Endothelial cell of umbilical vein (primary cell): ENCODE measurements at regions of chr12 and their contacts with region 1.

Region 1: DNA sequence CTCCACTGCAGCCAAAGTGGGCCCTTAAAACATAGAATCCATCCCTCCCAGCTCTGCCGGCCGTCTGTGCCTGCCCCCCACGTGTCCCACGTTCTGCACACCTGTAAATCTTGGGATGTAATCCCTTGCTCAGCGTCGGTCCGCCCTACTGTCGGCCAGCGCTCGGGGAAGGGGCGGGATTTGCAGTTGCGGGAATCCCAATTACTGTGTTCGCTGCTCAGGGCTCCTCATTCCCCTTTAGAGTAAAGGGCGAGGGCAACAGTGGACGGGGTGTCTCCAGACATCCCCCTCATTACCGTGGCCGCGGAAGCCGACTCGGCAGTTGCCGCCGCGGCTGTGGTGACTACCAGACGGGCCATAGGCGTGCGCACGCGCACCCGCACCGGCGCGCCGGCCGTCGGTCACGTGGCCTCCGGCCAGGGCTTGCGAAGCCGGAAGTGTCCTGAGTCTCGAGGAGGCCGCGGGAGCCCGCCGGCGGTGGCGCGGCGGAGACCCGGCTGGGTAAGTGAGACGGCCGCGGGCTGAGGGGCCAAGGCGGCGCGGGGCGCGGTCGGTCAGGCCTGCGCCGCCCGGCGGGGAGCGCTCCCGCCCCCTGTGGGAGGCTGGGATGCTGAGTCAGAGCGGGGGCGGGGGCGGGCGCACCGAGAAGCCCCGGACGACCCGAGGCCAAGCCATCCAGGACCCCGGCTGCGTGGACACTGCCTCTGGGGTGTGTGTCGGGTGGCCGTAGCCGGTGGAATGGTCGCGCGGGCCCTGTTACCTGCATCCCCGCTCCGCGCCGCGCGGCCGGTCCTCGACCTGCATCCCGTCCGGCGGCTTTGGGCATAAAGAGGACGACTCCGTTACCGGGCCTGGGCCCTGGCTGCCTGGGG is at the start of gene TBK1:
- DNase-seq: peak; percentile 91
- H3K4me3 ChIP-seq: peak within 1 kb of the TSS; percentile 39 to 100 (median 83)
- H3K27ac ChIP-seq: peak within 1 kb of the TSS; percentile 97
- H3K4me1 ChIP-seq: peaks cover 18% of the 10 kb centered on the region
- H3K27me3 ChIP-seq: no peaks in the 10 kb centered on the region
- CTCF ChIP-seq: no peak
- POLR2A ChIP-seq: peak; percentile 82
- total RNA-seq, gene TBK1: 27.7 and 28.9 TPM in 2 replicates

Region 2: GRCh38 chr12:64403707-64404469 is 48.0 kb before region 1 on chr12 and contains the start of gene XPOT:
- CTCF ChIA-PET with region 1: no interaction called
- POLR2A ChIA-PET with region 1: no interaction called
- dilution Hi-C with region 1: no loop called
- intact Hi-C with region 1: loop called (anchors 2 kb)
- DNase-seq: peak; percentile 97
- H3K4me3 ChIP-seq: peak within 1 kb of the TSS; percentile 55 to 100 (median 78)
- H3K27ac ChIP-seq: peak within 1 kb of the TSS; percentile 89
- H3K4me1 ChIP-seq: peaks cover 10% of the 10 kb centered on the region
- H3K27me3 ChIP-seq: no peaks in the 10 kb centered on the region
- CTCF ChIP-seq: peak in 1 of 2 donors; percentile 16
- POLR2A ChIP-seq: peak; percentile 97
- total RNA-seq, gene XPOT: 88.9 and 93.0 TPM in 2 replicates